MCF 10A (cell line): ENCODE measurements at regions of chr2 and their contacts with region 1.

Region 1: GRCh38 chr2:60641811-60642788 is 88.6 kb upstream of the BCL11A start:
- DNase-seq: peak; percentile 60
- H3K4me3 Mint-ChIP-seq: no peak overlapping the region
- H3K27ac Mint-ChIP-seq: no peak overlapping the region
- H3K4me1 Mint-ChIP-seq: no peaks in the 10 kb centered on the region
- H3K27me3 Mint-ChIP-seq: peaks cover 22% of the 10 kb centered on the region
- CTCF ChIP-seq: peak; percentile 64

Region 2: GRCh38 chr2:60560734-60561644 is 81.1 kb before region 1 on chr2:
- CTCF ChIA-PET with region 1: interaction called, 46 read pairs
- POLR2A ChIA-PET with region 1: no interaction called
- intact Hi-C with region 1: loop called (anchors 1 kb)
- DNase-seq: peak; percentile 58
- H3K4me3 Mint-ChIP-seq: no peak overlapping the region
- H3K27ac Mint-ChIP-seq: no peak overlapping the region
- H3K4me1 Mint-ChIP-seq: no peaks in the 10 kb centered on the region
- H3K27me3 Mint-ChIP-seq: peaks cover 37% of the 10 kb centered on the region
- CTCF ChIP-seq: peak; percentile 41

Region 3: DNA sequence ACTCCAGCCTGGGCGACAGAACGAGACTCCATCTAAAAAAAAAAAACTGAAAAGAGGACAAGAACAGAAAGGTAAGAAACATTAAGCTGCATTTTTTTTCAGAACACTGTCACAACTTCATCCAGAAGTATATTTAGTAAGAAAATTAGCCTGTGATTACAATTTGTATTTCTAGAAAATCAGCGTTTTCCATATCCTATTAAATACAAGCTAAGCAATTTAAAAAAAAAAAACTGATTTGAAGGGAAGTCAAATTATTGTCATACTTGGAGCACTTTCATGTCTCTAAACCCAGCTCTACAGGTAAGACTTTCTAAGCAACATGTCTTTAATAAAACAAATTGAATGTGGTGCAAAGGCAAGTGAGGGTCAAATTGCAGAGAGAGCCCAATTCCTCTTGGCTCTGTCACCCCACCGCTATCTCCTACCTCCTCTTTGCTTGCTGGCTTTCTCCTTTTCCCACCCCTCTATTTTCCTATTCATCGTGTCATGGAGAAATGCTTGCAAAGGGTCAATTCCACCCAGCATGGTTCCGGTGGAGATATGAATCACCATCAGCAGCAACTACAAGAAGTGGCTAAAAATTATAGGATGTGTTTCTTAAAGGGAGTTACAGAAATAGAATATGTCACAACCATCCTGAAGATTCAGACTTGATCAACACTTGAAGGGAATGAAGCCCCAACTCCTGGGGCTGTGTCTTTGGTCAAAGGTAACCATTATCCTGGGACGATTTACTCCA is 20.2 kb before region 1 on chr2:
- CTCF ChIA-PET with region 1: interaction called, 12 read pairs
- POLR2A ChIA-PET with region 1: no interaction called
- intact Hi-C with region 1: no loop called
- DNase-seq: no peak
- H3K4me3 Mint-ChIP-seq: no peak overlapping the region
- H3K27ac Mint-ChIP-seq: no peak overlapping the region
- H3K4me1 Mint-ChIP-seq: no peaks in the 10 kb centered on the region
- H3K27me3 Mint-ChIP-seq: peaks cover 51% of the 10 kb centered on the region
- CTCF ChIP-seq: no peak

Region 4: DNA sequence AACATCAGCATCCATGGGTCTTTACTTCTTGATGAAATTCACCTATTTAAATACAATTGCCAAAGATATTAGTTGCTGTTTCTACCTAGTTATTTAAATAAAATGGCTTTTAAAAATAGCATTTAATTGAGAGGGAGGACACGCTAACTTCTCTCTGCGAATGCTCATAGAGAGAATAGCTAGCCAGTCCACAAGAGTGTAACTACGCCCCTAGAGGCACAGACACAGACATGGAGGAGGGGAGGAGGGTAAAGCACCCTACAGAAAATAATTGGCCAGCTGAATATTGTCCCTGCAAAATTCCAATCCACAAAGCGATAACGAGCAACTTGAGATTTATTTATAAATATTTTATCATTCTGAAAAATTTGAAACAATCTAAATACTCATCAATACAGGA is 16.9 kb after region 1 on chr2:
- CTCF ChIA-PET with region 1: interaction called, 44 read pairs
- POLR2A ChIA-PET with region 1: no interaction called
- intact Hi-C with region 1: no loop called
- DNase-seq: no peak
- H3K4me3 Mint-ChIP-seq: no peak overlapping the region
- H3K27ac Mint-ChIP-seq: no peak overlapping the region
- H3K4me1 Mint-ChIP-seq: no peaks in the 10 kb centered on the region
- H3K27me3 Mint-ChIP-seq: peaks cover 28% of the 10 kb centered on the region
- CTCF ChIP-seq: no peak

Region 5: DNA sequence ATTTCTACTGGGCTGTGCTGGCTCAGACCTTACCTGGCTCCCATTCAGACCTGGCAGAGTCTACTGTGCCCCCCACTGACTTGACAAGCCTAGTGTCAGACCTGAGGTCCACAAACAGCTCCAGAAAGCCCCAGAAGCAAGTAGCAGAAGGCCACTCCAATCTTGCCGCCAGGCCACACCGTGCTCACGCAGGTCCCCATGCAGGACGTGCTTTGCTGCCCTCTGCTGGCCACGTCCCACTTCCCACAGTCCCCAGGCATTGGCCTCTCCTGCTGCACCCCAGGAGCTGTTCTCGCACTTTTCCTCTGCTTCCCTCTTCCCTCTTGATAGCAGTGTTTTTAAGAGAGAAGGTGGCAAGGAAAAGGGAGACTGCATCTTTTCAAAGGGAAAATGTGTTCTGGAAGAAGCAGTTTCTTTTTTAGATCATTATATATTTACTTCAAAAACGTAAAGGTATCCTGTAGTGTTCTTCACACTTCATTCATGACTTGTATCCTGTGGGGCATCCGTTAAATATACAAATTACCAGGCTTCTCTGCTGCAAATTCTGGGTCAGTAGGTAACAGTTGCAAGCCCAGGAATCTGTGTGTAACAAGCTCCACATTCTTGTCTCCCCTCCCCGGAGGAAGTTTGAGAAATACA is 32.5 kb after region 1 on chr2:
- CTCF ChIA-PET with region 1: interaction called, 65 read pairs
- POLR2A ChIA-PET with region 1: no interaction called
- intact Hi-C with region 1: no loop called
- DNase-seq: peak; percentile 77
- H3K4me3 Mint-ChIP-seq: no peak overlapping the region
- H3K27ac Mint-ChIP-seq: no peak overlapping the region
- H3K4me1 Mint-ChIP-seq: peaks cover 11% of the 10 kb centered on the region
- H3K27me3 Mint-ChIP-seq: peaks cover 21% of the 10 kb centered on the region
- CTCF ChIP-seq: peak; percentile 83